Posterior cingulate gyrus (tissue), 11 donors: ENCODE measurements at regions of chr17 and their contacts with region 1.

Region 1: DNA sequence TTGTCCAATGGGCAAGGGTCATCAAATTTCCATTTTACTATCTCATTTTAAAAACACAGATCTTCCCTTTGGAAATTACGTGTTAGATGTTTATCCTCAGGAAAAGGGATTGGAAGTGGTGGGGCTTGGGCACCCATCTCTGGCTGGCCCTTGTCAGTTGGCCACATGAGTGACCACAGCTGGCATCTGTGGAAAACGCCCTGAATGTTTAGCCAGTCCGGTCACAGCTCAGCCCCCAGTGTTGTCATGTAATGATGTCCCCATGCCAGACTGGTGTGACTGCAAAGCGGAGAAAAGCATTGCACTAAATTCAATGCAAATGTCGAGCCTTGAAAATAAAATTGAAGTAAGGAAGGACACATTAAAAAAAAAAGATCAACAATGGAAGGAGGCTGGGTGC is 53.0 kb downstream of the TMC6 start:
- DNase-seq: peak in 8 of 10 donors; percentile 39 to 95 (median 66)

Region 2: DNA sequence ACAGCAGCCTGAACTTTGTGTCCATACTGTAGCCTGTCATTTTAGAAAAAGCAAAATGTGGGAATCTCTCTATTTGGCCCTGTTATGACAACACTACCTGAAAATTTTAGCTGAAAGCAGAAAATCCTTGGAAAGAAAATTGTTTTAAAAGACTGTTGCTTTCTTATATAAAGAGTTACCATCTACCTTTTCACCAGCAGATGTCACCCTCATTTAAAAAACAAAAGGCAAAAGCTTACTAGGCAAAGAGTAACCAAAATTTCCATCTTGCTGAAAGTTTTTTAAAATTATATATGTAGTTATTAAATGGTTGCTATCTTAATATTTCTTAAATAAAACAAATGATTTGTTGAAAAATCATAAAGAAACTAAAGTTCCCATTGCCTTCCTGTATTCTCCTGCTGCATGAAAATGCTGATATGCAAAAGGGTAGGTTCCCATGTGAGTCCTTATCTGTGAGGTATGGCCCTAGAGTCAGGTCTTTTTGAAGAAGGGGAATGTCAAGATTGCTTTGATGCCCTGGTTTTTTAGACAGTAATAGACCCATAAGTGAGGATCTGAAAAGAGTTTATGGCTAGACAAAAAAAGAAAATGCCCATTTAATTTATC is 56.1 kb before region 1 on chr17:
- intact Hi-C with region 1: loop called (anchors 5 kb)
- DNase-seq: no peak

Region 3: GRCh38 chr17:78040440-78041385 is 34.8 kb before region 1 on chr17:
- intact Hi-C with region 1: loop called (anchors 5 kb)
- DNase-seq: peak; percentile 53 to 96 (median 74)

Region 4: DNA sequence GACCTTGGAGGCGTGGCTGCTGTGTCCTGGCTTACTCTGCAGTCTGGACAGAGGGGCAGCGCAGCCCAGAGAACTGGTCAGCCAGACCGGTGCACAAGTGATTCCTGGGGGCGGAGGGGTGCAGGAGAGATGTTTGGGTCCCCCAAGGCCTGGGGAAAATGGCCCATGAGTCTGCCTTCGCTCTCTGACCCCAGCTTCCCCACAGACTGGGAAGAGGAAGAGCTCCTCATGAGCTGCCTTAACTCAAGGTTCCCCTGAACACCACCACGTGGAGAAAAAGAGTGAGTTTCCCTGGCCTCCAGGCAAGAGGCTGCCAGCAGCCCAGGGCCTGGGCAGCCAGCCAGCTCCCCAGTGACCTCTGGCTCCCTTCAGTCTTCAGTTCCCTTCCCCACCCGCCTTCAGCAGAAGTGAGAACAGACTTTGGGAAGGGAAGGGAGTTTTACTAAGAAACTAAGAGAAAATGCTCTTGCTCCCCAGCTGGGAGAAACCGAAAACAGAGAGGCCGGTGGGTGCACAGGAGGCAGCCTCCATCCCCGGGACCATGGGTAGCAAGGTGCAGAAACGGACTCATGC is 68.7 kb after region 1 on chr17:
- intact Hi-C with region 1: no loop called
- DNase-seq: peak; percentile 43 to 94 (median 60)